B cell (primary cell): ENCODE measurements at regions of chr11 and their contacts with region 1.

Region 1: DNA sequence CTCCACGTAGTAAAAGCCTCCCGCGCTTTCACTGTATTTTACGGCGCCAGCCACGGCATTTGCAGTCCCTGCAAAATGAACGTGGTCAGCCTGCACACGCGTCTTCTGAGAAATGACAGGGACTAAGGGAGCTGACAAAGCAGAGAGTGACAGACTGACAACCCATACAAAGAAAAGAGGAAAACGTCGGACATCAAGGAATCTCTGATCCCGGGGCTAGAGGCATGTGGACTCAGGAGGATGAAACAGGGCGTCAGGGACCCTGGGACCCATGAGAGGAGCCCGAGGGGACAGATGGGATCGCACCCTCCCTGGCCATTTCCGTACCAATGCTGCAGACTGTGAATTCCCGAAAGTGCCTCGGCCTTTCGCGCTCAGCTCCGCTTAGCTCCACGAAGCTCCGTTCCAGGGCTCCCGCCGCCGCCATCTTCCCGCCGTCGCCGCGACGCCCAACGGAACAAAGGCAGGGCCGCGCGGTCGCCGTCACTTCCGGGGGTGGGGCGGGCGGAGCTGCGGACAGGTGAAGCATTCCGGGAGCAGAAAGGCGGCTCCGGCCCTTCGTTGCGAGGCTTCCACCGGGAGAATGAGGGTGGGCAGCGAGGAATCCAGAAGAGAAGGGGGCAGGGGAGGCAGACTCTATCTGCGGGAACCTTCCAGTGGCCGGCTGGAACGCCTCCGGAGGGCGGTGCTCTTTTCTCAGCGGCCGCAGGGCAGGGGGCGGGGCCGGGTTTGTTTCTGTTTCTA is at the start of gene NUP160:
- DNase-seq: peak; percentile 92
- ATAC-seq: peak; percentile 77
- H3K4me3 ChIP-seq: peak within 1 kb of the TSS; percentile 93 to 99 (median 98)
- H3K4me3 Mint-ChIP-seq: peak within 1 kb of the TSS; percentile 99
- H3K27ac ChIP-seq: peak within 1 kb of the TSS; percentile 94 to 95
- H3K27ac Mint-ChIP-seq: peak within 1 kb of the TSS; percentile 98
- H3K4me1 ChIP-seq: peaks cover 62 to 66% of the 10 kb centered on the region in 2 donors
- H3K4me1 Mint-ChIP-seq: peaks cover 57% of the 10 kb centered on the region
- H3K27me3 ChIP-seq: no peaks in the 10 kb centered on the region
- H3K27me3 Mint-ChIP-seq: no peaks in the 10 kb centered on the region
- CTCF ChIP-seq: no peak
- total RNA-seq, gene NUP160: 74.3 and 77.3 TPM in 2 replicates

Region 2: GRCh38 chr11:46936138-46937110 is 911.6 kb before region 1 on chr11 and contains the start of gene CSTPP1:
- CTCF ChIA-PET with region 1: no interaction called
- POLR2A ChIA-PET with region 1: no interaction called
- intact Hi-C with region 1: loop called (anchors 5 kb)
- DNase-seq: peak; percentile 93
- ATAC-seq: peak; percentile 90
- H3K4me3 ChIP-seq: peak within 1 kb of the TSS; percentile 38 to 67 (median 64)
- H3K4me3 Mint-ChIP-seq: peak within 1 kb of the TSS; percentile 90
- H3K27ac ChIP-seq: peak within 1 kb of the TSS; percentile 30 to 69
- H3K27ac Mint-ChIP-seq: peak within 1 kb of the TSS; percentile 85
- H3K4me1 ChIP-seq: peaks cover 5 to 12% of the 10 kb centered on the region in 2 donors
- H3K4me1 Mint-ChIP-seq: peaks cover 18% of the 10 kb centered on the region
- H3K27me3 ChIP-seq: peaks cover 0 to 5% (median 0%) of the 10 kb centered on the region in 4 experiments
- H3K27me3 Mint-ChIP-seq: peaks cover 13% of the 10 kb centered on the region
- CTCF ChIP-seq: no peak
- total RNA-seq, gene CSTPP1: 27.4 and 29.0 TPM in 2 replicates

Region 3: GRCh38 chr11:47552566-47553416 is 295.3 kb before region 1 on chr11 and contains the start of gene CELF1:
- CTCF ChIA-PET with region 1: no interaction called
- POLR2A ChIA-PET with region 1: interaction called, 3 read pairs
- intact Hi-C with region 1: loop called (anchors 2 kb)
- DNase-seq: peak; percentile 96
- ATAC-seq: peak; percentile 95
- H3K4me3 ChIP-seq: peak within 1 kb of the TSS; percentile 65 to 94 (median 90)
- H3K4me3 Mint-ChIP-seq: peak within 1 kb of the TSS; percentile 99
- H3K27ac ChIP-seq: peak within 1 kb of the TSS; percentile 72 to 88
- H3K27ac Mint-ChIP-seq: peak within 1 kb of the TSS; percentile 93
- H3K4me1 ChIP-seq: peaks cover 31 to 32% of the 10 kb centered on the region in 2 donors
- H3K4me1 Mint-ChIP-seq: peaks cover 44% of the 10 kb centered on the region
- H3K27me3 ChIP-seq: no peaks in the 10 kb centered on the region
- H3K27me3 Mint-ChIP-seq: no peaks in the 10 kb centered on the region
- CTCF ChIP-seq: peak; percentile 96
- total RNA-seq, gene CELF1: 153 and 167 TPM in 2 replicates

Region 4: GRCh38 chr11:47715082-47715669 is 132.9 kb before region 1 on chr11 and contains the start of gene AGBL2:
- CTCF ChIA-PET with region 1: no interaction called
- POLR2A ChIA-PET with region 1: no interaction called
- intact Hi-C with region 1: loop called (anchors 5 kb)
- DNase-seq: peak; percentile 88
- ATAC-seq: peak; percentile 99
- H3K4me3 ChIP-seq: peak within 1 kb of the TSS; percentile 81 to 95 (median 94)
- H3K4me3 Mint-ChIP-seq: peak within 1 kb of the TSS; percentile 97
- H3K27ac ChIP-seq: peak within 1 kb of the TSS; percentile 84 to 97
- H3K27ac Mint-ChIP-seq: peak within 1 kb of the TSS; percentile 97
- H3K4me1 ChIP-seq: peaks cover 11 to 15% of the 10 kb centered on the region in 2 donors
- H3K4me1 Mint-ChIP-seq: peaks cover 14% of the 10 kb centered on the region
- H3K27me3 ChIP-seq: no peaks in the 10 kb centered on the region
- H3K27me3 Mint-ChIP-seq: no peaks in the 10 kb centered on the region
- CTCF ChIP-seq: no peak
- total RNA-seq, gene AGBL2: 13.6 and 17.0 TPM in 2 replicates

Region 5: DNA sequence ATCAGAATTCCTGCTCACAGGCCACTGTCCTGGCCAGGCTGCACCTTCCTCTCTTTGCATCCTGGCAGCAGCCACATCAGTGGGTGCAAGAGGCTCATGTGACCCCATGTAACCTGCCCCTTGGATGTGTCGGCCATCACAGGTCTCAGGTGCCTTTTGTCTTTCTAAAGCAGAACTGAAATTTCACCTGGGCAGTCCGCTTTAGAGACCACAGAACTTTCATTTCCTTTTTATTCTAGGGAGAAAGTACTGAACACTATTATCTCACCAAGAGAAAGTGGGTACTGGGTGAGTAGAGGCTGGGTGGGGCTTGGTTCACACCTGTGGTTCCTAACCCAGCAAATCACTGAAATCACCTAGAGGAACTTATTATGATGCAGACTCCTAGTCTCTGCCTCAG is 51.7 kb after region 1 on chr11:
- CTCF ChIA-PET with region 1: no interaction called
- POLR2A ChIA-PET with region 1: interaction called, 3 read pairs
- intact Hi-C with region 1: loop called (anchors 2 kb)
- DNase-seq: peak; percentile 91
- ATAC-seq: peak; percentile 93
- H3K4me3 ChIP-seq: no peak overlapping the region
- H3K4me3 Mint-ChIP-seq: peak overlapping the region; percentile 61
- H3K27ac ChIP-seq: peak overlapping the region; percentile 76 to 88
- H3K27ac Mint-ChIP-seq: peak overlapping the region; percentile 96
- H3K4me1 ChIP-seq: peaks cover 33 to 38% of the 10 kb centered on the region in 2 donors
- H3K4me1 Mint-ChIP-seq: peaks cover 38% of the 10 kb centered on the region
- H3K27me3 ChIP-seq: no peaks in the 10 kb centered on the region
- H3K27me3 Mint-ChIP-seq: no peaks in the 10 kb centered on the region
- CTCF ChIP-seq: no peak